Caco-2 (cell line): ENCODE measurements at regions of chr12 and their contacts with region 1.

Region 1: DNA sequence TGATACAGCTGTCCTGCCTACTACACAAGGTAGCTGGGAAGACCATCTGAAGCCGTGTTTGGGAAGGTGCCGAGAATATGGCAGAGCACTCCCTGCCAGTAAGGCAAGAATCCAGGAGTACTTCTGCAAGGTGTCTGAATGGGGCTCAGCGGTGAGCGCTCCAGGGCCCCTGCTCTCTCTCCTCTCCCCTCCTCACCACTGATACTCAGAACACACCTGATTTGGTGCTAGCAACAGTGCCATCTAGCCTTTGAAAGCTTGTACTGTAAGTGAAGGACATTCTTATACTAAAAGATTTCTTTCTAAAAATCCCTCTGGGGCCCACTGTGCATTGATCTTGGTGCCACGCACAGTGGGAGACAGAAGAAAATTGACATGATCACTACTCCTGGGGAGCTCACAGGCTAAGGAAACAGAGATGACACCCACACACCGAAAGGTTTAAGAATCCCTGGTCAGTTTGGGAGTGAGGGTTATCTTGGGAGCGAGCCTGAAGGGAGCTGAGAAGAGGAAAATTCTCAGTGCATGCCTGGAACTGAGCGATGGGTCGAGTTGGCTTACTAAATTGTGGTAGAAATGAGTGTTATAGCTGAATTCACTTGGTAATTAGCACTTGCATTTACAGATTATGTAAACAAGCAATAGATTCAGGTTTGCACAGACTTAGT is 216.9 kb downstream of the NTF3 start:
- DNase-seq: peak; percentile 62 to 66
- H3K4me3 ChIP-seq: no peak overlapping the region
- H3K4me3 Mint-ChIP-seq: no peak overlapping the region
- H3K27ac Mint-ChIP-seq: no peak overlapping the region
- H3K4me1 ChIP-seq: no peaks in the 10 kb centered on the region
- H3K4me1 Mint-ChIP-seq: peaks cover 8% of the 10 kb centered on the region
- H3K27me3 ChIP-seq: no peaks in the 10 kb centered on the region
- H3K27me3 Mint-ChIP-seq: no peaks in the 10 kb centered on the region
- CTCF ChIP-seq: peak; percentile 81 to 91

Region 2: DNA sequence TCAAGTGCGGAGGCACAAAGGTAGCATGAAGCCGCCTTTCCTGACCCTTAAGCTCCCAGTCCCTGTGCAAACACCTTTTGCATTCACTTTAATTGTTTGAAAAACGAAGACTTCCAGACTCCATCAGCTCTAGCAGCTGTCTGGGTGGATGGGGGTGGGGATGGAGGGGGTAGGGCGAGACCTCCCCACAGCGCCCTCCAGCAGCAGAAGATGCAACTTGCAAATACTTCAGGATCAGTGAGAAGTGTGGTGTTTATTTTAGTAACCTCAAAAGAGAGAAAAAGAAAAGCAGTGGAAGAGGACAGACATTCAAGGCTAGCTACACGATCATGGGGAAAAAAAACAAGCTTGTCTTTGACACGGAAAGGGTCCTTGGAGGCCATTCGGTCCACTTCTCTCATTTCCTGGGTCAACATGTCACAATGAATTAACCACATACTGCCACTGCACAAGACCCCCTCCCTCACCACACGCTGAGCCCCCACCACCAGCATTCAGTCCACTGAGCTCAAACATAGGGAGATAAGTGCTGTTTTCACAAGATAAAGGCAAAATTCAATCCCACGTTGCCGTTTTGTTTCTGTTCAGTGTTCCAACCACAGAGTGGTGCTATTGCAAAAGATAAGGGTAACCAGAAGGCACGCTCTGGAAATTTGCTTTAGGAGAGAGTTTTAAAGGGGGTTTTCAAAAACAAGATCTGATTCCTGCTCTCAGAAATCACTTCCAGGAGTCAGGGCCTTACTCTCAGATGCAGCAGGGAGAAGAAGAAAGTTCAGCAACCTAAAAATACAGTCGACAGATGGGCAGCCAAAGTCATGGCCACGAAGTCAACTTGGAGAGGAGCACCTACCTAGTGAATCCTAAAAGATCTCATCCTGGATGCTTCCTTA is 220.2 kb before region 1 on chr12:
- CTCF ChIA-PET with region 1: interaction called, 19 read pairs
- POLR2A ChIA-PET with region 1: no interaction called
- intact Hi-C with region 1: loop called (anchors 5 kb)
- DNase-seq: peak in 1 of 2 experiments; percentile 43
- H3K4me3 ChIP-seq: no peak overlapping the region
- H3K4me3 Mint-ChIP-seq: peak overlapping the region; percentile 52
- H3K27ac Mint-ChIP-seq: peak overlapping the region; percentile 32
- H3K4me1 ChIP-seq: peaks cover 19% of the 10 kb centered on the region
- H3K4me1 Mint-ChIP-seq: peaks cover 26% of the 10 kb centered on the region
- H3K27me3 ChIP-seq: no peaks in the 10 kb centered on the region
- H3K27me3 Mint-ChIP-seq: no peaks in the 10 kb centered on the region
- CTCF ChIP-seq: peak; percentile 46 to 56

Region 3: GRCh38 chr12:5480218-5480937 is 168.4 kb before region 1 on chr12:
- CTCF ChIA-PET with region 1: interaction called, 4 read pairs
- POLR2A ChIA-PET with region 1: no interaction called
- intact Hi-C with region 1: loop called (anchors 1 kb)
- DNase-seq: no peak
- H3K4me3 ChIP-seq: no peak overlapping the region
- H3K4me3 Mint-ChIP-seq: no peak overlapping the region
- H3K27ac Mint-ChIP-seq: no peak overlapping the region
- H3K4me1 ChIP-seq: no peaks in the 10 kb centered on the region
- H3K4me1 Mint-ChIP-seq: no peaks in the 10 kb centered on the region
- H3K27me3 ChIP-seq: no peaks in the 10 kb centered on the region
- H3K27me3 Mint-ChIP-seq: no peaks in the 10 kb centered on the region
- CTCF ChIP-seq: no peak

Region 4: DNA sequence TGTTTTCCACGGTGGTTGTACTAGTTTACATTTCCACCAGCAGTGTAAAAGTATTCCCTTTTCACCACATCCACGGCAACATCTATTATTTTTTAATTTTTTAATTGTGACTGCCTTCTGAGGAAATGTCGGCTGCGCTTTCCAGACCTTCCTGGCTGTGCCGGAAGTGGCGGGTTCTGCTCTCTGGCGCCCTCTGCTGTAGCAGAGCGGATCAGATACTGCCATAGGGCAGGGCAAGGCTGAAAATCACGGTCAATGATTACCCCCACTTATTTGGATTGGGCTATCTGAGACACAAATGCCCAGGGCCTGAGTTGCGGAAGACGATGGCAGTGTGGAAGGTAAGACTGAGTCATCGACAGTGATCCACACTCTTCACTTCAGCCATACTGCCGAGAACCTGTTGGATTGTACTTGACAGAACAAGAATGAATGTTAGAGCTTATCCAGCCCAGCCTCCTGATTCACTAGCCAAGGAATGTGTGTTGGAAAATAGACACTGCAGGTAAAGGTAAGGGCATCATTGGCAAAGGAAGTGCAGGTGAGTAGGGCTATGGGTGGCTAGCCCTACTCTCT is 92.7 kb before region 1 on chr12:
- CTCF ChIA-PET with region 1: no interaction called
- POLR2A ChIA-PET with region 1: no interaction called
- intact Hi-C with region 1: loop called (anchors 2 kb)
- DNase-seq: peak in 1 of 2 experiments; percentile 67
- H3K4me3 ChIP-seq: no peak overlapping the region
- H3K4me3 Mint-ChIP-seq: no peak overlapping the region
- H3K27ac Mint-ChIP-seq: no peak overlapping the region
- H3K4me1 ChIP-seq: no peaks in the 10 kb centered on the region
- H3K4me1 Mint-ChIP-seq: peaks cover 6% of the 10 kb centered on the region
- H3K27me3 ChIP-seq: no peaks in the 10 kb centered on the region
- H3K27me3 Mint-ChIP-seq: no peaks in the 10 kb centered on the region
- CTCF ChIP-seq: peak; percentile 31 to 82